ENCODE measurements at regions of chr18 and their contacts with region 1.

Region 1: DNA sequence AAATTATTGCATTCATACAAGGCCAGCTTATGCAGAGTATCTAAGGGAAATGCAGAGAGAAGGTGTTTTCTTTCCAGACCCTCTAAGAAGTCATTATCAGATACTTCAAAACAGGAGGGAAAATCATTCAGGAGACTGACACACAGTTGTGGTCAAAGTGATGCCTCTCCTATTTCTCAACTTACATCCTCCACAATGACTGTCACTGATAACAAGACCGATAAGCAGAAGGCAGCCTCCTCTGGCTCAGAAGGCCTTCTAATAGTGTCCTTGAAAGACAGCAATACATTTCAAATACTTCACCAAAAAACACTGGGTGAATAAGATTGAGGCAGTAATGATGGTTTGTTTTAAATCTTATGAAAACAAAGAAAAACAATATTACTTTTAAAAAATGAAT is 199.7 kb downstream of the PIEZO2 start:
- DNase-seq: no peak
- ATAC-seq: no peak
- H3K4me3 ChIP-seq: no peak overlapping the region
- H3K27ac ChIP-seq: no peak overlapping the region
- H3K4me1 ChIP-seq: no peaks in the 10 kb centered on the region
- H3K27me3 ChIP-seq: no peaks in the 10 kb centered on the region
- CTCF ChIP-seq: no peak
- POLR2A ChIP-seq: no peak

Region 2: DNA sequence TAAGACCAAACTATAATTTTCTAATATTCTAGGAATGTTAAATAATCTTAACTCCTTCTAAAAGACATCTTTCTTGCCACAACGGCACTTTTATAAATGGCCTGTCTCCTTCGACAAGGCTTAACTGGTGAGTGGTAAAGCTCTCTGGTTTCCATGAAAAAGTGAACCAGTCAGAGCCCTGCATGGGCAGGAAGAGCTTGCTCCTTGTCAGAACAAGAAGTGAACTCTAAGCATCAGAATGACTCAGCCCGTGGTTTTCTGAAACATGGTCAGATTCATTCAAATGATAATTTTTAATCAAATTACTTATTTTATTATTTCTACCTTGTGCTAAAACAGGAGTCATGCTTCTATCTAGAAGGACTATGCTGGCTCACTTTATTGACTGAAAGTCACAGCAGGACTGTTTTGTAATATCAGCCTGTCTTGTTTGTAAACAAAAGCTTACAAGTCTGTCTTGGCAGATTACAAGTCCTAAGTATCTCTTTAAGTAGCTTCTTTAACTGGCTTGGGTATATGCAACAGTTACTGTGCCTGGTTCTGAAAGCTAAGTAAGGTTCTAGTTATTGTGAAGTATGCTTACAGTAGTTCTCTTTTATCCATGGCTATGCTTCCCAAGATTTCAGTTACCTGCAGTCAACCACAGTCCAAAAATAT is 178.5 kb before region 1 on chr18:
- intact Hi-C with region 1: loop called in 1 of 2 experiments (anchors 10 kb)
- DNase-seq: no peak
- ATAC-seq: no peak
- H3K4me3 ChIP-seq: no peak overlapping the region
- H3K27ac ChIP-seq: no peak overlapping the region
- H3K4me1 ChIP-seq: no peaks in the 10 kb centered on the region
- H3K27me3 ChIP-seq: no peaks in the 10 kb centered on the region
- CTCF ChIP-seq: no peak
- POLR2A ChIP-seq: no peak

Region 3: DNA sequence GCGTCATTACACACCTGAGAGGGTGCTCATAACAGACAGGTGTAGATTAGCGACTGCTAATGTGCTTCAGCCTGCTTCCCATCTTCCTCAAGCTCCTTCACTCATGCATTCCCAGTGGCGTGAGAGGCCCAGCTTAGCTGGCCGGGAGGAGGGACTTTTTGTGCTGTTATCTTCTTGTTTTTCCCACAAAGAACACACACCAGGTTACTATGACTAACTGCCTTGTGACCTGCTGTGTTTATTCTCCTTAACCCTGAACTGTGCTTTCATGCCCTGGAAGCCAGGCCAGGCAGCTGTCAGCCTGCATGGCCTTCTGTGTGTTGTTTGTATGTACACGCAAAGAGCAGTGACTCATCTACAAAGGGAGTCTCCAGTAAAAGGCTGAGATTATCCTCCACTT is 55.9 kb after region 1 on chr18:
- intact Hi-C with region 1: loop called in 1 of 2 experiments (anchors 10 kb)
- DNase-seq: peak; percentile 54 to 68 (median 67)
- ATAC-seq: peak; percentile 96 to 98 (median 97)
- H3K4me3 ChIP-seq: no peak overlapping the region
- H3K27ac ChIP-seq: peak overlapping the region; percentile 42 to 57 (median 49)
- H3K4me1 ChIP-seq: peaks cover 0 to 9% (median 4%) of the 10 kb centered on the region in 4 donors
- H3K27me3 ChIP-seq: no peaks in the 10 kb centered on the region
- CTCF ChIP-seq: no peak
- POLR2A ChIP-seq: no peak

Region 4: GRCh38 chr18:11020877-11021414 is 71.3 kb after region 1 on chr18:
- intact Hi-C with region 1: no loop called
- DNase-seq: no peak
- ATAC-seq: peak in 1 of 4 donors; percentile 30
- H3K4me3 ChIP-seq: no peak overlapping the region
- H3K27ac ChIP-seq: no peak overlapping the region
- H3K4me1 ChIP-seq: no peaks in the 10 kb centered on the region
- H3K27me3 ChIP-seq: no peaks in the 10 kb centered on the region
- CTCF ChIP-seq: no peak
- POLR2A ChIP-seq: no peak

Region 5: DNA sequence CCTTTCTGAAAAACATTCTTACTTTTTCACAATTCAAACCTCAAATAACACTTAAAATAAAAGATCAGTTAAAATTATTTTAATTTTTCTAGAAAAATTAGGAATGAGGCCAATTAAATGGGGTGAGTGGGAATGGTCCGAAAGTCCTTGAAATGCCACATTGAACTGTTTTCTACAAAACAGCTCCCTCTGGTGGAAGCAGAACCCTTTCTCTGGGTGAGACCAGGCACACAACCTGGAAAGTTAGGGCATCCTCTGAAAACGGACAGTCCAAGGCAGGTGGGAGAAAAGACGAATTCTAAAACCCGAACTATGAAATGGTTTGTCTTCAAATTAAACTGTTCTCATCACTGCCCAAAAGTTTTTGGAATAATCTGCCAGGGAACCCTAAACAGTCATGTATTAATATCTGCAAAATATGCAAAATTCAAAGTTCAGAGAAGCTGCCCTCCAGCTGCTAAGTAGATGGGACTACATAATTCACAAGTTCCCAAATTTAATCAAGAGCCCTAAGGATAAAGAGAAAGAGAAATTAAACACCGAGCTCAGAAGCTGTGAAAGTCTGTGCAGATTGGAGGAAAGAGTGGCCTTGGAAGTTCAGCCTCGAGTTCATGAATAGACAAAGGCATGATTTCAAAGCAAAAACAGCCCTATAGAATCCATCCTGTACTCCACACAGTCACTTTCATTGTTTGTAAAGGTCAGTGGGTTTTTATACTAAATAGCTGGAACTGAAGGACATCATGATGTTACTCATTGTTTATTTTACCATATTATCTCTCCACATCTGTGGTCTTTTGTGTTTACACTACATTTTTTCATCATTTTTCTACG is 91.4 kb after region 1 on chr18:
- intact Hi-C with region 1: no loop called
- DNase-seq: peak in 1 of 3 donors; percentile 73
- ATAC-seq: peak; percentile 88 to 91 (median 89)
- H3K4me3 ChIP-seq: no peak overlapping the region
- H3K27ac ChIP-seq: no peak overlapping the region
- H3K4me1 ChIP-seq: peaks cover 0 to 7% (median 2%) of the 10 kb centered on the region in 4 donors
- H3K27me3 ChIP-seq: no peaks in the 10 kb centered on the region
- CTCF ChIP-seq: peak; percentile 72 to 83 (median 77)
- POLR2A ChIP-seq: no peak

Measured in right lobe of liver (tissue), 6 donors.